ENCODE measurements at regions of chr3 and their contacts with region 1.

Region 1: GRCh38 chr3:195182470-195182795 is 88.5 kb downstream of the XXYLT1 start:
- DNase-seq: peak in 2 of 3 donors; percentile 57 to 67
- H3K4me3 ChIP-seq: no peak overlapping the region
- H3K27ac ChIP-seq: peak overlapping the region in 1 of 2 experiments; percentile 89
- H3K4me1 ChIP-seq: peaks cover 7 to 74% (median 69%) of the 10 kb centered on the region in 4 experiments
- H3K27me3 ChIP-seq: no peaks in the 10 kb centered on the region

Region 2: GRCh38 chr3:195162033-195162669 is 20.3 kb before region 1 on chr3:
- CTCF ChIA-PET with region 1: interaction called, 21 read pairs
- POLR2A ChIA-PET with region 1: interaction called, 11 read pairs
- DNase-seq: peak; percentile 91 to 99 (median 97)
- H3K4me3 ChIP-seq: no peak overlapping the region
- H3K27ac ChIP-seq: peak overlapping the region; percentile 52 to 85
- H3K4me1 ChIP-seq: peaks cover 36 to 98% (median 87%) of the 10 kb centered on the region in 4 experiments
- H3K27me3 ChIP-seq: no peaks in the 10 kb centered on the region